CD4-positive, alpha-beta T cell (primary cell): ENCODE measurements at regions of chr16 and their contacts with region 1.

Region 1: GRCh38 chr16:807347-808084 is 7.0 kb upstream of the GNG13 start:
- DNase-seq: peak; percentile 58 to 92 (median 77)
- ATAC-seq: peak; percentile 83
- H3K4me3 ChIP-seq: peak overlapping the region; percentile 75
- H3K4me3 Mint-ChIP-seq: peak overlapping the region; percentile 95
- H3K27ac ChIP-seq: peak overlapping the region; percentile 72 to 87
- H3K27ac Mint-ChIP-seq: peak overlapping the region; percentile 92
- H3K4me1 ChIP-seq: peaks cover 21% of the 10 kb centered on the region
- H3K4me1 Mint-ChIP-seq: peaks cover 15% of the 10 kb centered on the region
- H3K27me3 ChIP-seq: peaks cover 4 to 12% of the 10 kb centered on the region in 2 experiments
- H3K27me3 Mint-ChIP-seq: peaks cover 13% of the 10 kb centered on the region
- CTCF ChIP-seq: no peak

Region 2: GRCh38 chr16:740764-741505 is 66.6 kb before region 1 on chr16 and contains the start of gene CIAO3:
- CTCF ChIA-PET with region 1: no interaction called
- POLR2A ChIA-PET with region 1: no interaction called
- intact Hi-C with region 1: loop called in 1 of 2 experiments (anchors 1 kb)
- DNase-seq: peak; percentile 83 to 96 (median 91)
- ATAC-seq: peak; percentile 94
- H3K4me3 ChIP-seq: peak within 1 kb of the TSS; percentile 88
- H3K4me3 Mint-ChIP-seq: peak within 1 kb of the TSS; percentile 83
- H3K27ac ChIP-seq: peak within 1 kb of the TSS; percentile 64 to 73
- H3K27ac Mint-ChIP-seq: peak within 1 kb of the TSS; percentile 62
- H3K4me1 ChIP-seq: peaks cover 20% of the 10 kb centered on the region
- H3K4me1 Mint-ChIP-seq: no peaks in the 10 kb centered on the region
- H3K27me3 ChIP-seq: no peaks in the 10 kb centered on the region
- H3K27me3 Mint-ChIP-seq: no peaks in the 10 kb centered on the region
- CTCF ChIP-seq: peak; percentile 97
- total RNA-seq, gene CIAO3: 33.3 to 38.2 TPM

Region 3: DNA sequence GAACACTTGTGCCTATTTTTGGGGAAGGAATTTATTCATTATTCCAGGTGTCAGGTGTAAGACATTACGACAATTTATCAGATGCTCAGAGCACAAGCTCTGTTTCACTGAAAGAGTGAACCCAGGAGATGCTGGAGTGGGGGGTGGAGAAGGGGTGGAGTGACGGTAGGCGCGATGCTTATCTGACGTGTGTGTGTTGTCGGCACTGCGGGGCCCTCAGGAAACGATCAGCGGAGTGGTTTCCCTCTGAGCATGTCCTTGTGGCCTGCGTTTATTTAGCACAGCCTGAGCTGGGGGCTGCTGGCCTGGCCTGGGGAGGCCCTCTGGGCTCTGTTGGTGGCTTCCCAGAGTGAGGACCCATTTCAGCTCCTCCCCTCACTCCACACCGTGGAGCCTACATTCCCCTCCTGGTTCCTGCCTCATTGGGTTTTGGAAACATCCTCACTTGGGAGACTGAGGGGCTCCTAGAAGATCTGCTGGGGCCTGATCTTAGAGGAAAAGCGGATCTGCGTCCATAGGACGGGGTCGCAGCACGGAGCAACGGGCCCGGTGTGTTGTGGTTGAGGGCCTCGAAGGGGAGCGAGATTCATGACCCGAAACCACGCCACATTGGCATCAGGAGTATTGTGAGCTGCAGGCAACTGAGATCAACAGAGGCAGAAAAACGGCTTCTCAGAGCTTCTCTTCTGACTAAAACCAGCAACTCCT is 12.0 kb after region 1 on chr16:
- CTCF ChIA-PET with region 1: no interaction called
- POLR2A ChIA-PET with region 1: no interaction called
- intact Hi-C with region 1: no loop called
- DNase-seq: peak in 11 of 14 experiments; percentile 7 to 73 (median 45)
- ATAC-seq: peak; percentile 97
- H3K4me3 ChIP-seq: no peak overlapping the region
- H3K4me3 Mint-ChIP-seq: peak overlapping the region; percentile 57
- H3K27ac ChIP-seq: no peak overlapping the region
- H3K27ac Mint-ChIP-seq: peak overlapping the region; percentile 86
- H3K4me1 ChIP-seq: peaks cover 13% of the 10 kb centered on the region
- H3K4me1 Mint-ChIP-seq: peaks cover 11% of the 10 kb centered on the region
- H3K27me3 ChIP-seq: peaks cover 4 to 26% of the 10 kb centered on the region in 2 experiments
- H3K27me3 Mint-ChIP-seq: peaks cover 31% of the 10 kb centered on the region
- CTCF ChIP-seq: no peak

Region 4: DNA sequence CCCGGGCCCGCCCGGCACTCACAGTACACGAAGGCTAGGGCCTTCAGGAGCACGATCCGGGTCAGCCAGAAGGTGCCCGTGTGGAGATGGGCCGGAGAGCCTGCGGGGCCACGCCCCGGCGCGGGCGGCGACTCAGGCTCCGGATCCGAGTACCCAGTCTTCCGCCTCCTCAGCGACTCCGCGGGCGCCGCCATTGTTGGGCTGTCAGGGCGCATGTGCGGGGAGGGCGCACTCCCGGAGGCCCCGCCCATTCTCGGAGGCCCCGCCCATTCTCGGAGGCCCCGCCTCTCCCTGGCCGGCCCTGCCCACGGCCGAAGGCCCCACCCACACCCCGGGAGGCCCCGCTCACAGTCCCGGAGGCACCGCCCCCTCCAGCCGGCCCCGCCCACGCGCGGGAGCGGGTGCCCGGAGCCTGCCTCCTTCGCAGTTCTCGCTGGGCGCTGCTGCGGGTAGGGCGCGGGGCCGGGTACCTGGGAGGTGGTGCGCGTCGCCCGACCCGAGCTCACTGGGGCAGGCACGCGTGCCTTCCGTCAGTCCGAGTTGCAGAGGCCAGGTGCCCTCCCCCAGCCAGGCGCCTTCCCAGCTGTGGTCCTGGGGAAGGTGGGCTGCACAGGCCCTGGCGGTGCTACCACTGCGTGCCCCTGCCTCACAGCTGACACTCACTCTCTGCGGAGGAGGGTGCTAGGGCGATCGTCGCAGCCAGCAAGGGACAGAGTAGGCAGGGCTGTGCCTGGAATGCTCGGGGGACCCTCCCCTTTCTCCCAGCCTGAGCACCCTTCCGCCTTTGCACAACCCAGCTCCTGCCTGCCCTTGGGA is 163.5 kb after region 1 on chr16 and contains the start of gene LMF1:
- CTCF ChIA-PET with region 1: no interaction called
- POLR2A ChIA-PET with region 1: no interaction called
- intact Hi-C with region 1: loop called in 1 of 2 experiments (anchors 5 kb)
- DNase-seq: peak; percentile 92 to 100 (median 96)
- ATAC-seq: peak; percentile 96
- H3K4me3 ChIP-seq: peak within 1 kb of the TSS; percentile 66
- H3K4me3 Mint-ChIP-seq: peak within 1 kb of the TSS; percentile 90
- H3K27ac ChIP-seq: peak within 1 kb of the TSS; percentile 44 to 53
- H3K27ac Mint-ChIP-seq: peak within 1 kb of the TSS; percentile 66
- H3K4me1 ChIP-seq: peaks cover 30% of the 10 kb centered on the region
- H3K4me1 Mint-ChIP-seq: peaks cover 27% of the 10 kb centered on the region
- H3K27me3 ChIP-seq: no peaks in the 10 kb centered on the region
- H3K27me3 Mint-ChIP-seq: no peaks in the 10 kb centered on the region
- CTCF ChIP-seq: no peak
- total RNA-seq, gene LMF1: 26.8 to 27.6 TPM